ENCODE measurements at regions of chr2 and their contacts with region 1.

Region 1: DNA sequence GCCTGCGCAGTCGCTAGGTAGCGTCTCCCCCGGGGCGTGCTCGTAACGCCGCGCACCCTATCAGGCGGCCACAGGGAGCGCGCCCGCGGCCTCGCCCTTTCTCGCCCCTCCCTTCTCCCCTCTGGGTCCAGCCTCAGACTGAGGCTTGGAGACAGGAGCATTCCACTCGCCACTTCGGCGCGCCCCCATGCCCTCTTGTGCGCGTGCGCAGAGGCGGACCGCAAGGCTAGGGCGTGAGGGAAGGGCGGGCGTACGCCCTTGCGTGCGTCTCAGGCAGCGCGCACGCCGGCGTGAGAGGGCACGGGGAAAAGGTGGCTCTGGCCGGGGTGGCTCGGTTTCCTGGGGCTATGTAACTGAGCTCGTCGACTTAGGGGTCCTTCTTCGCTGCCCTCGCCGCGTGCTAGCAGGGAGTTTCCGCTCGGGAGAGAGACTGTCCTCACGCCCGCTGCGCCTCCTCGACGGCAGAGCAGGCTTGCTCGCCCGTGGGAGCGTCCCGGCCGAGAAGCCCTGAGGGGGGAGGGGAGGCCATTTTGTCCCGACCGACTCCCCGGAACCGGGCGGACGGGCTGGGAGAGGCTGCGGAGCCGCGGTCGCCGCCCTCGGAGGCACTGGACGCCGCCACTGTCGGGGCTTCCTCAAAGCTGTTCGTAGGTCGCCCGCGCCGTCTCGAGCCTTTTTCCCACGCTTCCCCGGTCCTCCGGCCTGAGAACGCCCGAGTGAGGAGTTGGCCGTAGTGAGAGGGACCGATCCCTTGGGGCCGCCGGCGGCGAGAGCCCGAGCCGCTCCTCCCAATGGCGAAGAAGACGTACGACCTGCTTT is at the start of gene RAB10:
- DNase-seq: peak; percentile 99
- H3K4me3 Mint-ChIP-seq: peak within 1 kb of the TSS; percentile 96
- H3K27ac Mint-ChIP-seq: peak within 1 kb of the TSS; percentile 92
- H3K4me1 Mint-ChIP-seq: peaks cover 22% of the 10 kb centered on the region
- H3K27me3 Mint-ChIP-seq: no peaks in the 10 kb centered on the region
- CTCF ChIP-seq: no peak
- total RNA-seq, gene RAB10: 139 and 147 TPM in 2 replicates

Region 2: DNA sequence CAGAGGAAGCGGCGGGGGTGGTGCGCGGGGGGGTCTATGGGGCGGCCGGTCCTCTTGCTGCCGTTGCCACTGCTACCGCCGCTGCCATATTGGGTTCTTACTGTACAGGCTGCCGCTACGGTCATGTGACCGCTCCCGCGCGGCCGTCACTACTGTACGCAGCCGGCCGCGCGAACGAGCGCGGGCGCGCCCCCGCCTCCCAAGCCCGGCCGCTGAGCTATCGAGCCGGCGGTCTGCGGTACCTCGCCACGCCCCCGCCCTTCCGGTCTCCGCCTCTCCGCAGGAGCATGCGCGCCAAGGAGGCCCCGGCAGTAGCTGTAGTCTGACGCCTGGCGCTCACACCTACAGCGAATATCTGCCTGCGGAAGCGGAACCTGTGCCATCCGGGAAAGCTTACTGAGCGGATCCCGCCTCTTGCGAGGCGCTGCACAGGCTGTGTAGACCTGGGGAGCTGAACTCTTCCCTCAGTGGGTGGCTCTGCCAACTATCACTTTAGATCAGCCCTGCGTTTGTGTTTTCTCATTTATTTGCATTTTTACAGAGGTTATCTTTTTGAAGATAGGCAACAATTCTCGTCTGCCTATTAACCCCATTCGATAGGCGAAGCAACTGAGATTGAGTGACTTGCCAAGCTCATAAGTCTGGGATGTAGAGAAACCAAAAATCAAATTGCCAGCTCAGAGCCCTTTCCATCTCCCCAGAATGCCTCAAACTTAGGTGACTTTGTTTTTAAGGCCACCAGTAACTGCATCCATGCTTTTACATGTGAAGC is 155.5 kb before region 1 on chr2 and contains the start of gene ASXL2:
- CTCF ChIA-PET with region 1: no interaction called
- POLR2A ChIA-PET with region 1: interaction called, 17 read pairs
- intact Hi-C with region 1: no loop called
- DNase-seq: peak; percentile 95
- H3K4me3 Mint-ChIP-seq: peak within 1 kb of the TSS; percentile 95
- H3K27ac Mint-ChIP-seq: peak within 1 kb of the TSS; percentile 83
- H3K4me1 Mint-ChIP-seq: peaks cover 28% of the 10 kb centered on the region
- H3K27me3 Mint-ChIP-seq: no peaks in the 10 kb centered on the region
- CTCF ChIP-seq: no peak
- total RNA-seq, gene ASXL2: 34.0 and 35.3 TPM in 2 replicates

Region 3: DNA sequence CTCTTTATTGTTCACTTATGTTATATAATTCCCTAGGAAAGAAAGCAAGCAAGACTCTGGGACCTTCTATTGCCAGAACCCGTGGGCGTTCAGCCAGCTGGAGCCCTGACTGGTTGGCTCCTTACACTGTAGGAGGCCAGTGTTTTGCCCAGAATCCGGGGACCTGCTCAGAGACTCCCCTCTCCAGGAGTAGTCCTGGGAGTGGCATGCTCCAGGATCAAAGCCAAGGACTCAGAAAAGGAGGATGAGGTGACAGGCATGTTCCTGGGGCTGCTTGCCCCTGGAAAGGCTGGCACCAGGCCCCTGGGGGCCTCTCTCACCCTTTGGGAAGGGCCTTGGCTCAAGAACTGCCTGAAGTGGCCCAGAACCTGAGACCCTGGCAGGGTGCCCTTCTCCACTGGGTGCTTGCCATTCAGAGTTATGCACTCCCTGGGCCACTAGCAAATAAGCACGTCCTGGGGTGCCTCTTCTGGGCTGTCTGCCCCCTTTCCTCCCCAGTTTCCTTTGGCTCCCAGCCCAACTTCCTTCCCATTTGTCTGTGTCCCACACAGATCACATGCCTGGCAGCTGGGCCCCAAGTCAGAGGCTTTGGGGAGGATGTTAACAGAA is 32.2 kb before region 1 on chr2:
- CTCF ChIA-PET with region 1: interaction called, 3 read pairs
- POLR2A ChIA-PET with region 1: interaction called, 100 read pairs
- intact Hi-C with region 1: loop called (anchors 1 kb)
- DNase-seq: peak; percentile 87
- H3K4me3 Mint-ChIP-seq: no peak overlapping the region
- H3K27ac Mint-ChIP-seq: no peak overlapping the region
- H3K4me1 Mint-ChIP-seq: peaks cover 36% of the 10 kb centered on the region
- H3K27me3 Mint-ChIP-seq: no peaks in the 10 kb centered on the region
- CTCF ChIP-seq: no peak

Region 4: DNA sequence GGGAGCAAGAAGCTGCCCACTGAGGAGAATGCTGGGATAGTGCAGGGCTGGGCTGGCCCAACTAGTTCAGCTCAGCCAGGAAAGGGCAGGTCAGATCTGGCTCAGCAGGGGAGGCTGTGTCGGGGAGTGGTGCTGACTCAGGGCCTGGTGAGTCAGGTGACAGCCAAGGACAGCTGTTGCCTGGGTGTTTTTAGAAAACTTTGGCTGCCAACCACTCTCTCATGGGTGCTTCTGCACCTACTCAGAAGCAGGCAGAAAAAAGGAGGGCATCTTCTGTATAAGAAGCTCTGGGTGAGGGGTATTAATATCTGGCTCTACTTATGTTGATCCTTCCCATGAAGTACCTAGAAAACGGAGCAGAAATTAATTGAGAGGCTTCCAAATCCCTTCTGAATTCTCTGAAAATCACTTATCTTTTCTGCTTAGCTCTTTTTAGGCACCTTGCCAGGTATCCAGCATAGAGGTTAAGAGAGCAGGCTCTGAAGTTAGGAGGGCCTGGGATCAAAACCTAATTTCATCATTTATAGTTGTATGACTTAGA is 15.8 kb before region 1 on chr2:
- CTCF ChIA-PET with region 1: interaction called, 6 read pairs
- POLR2A ChIA-PET with region 1: interaction called, 250 read pairs
- intact Hi-C with region 1: no loop called
- DNase-seq: peak; percentile 93
- H3K4me3 Mint-ChIP-seq: no peak overlapping the region
- H3K27ac Mint-ChIP-seq: peak overlapping the region; percentile 56
- H3K4me1 Mint-ChIP-seq: peaks cover 22% of the 10 kb centered on the region
- H3K27me3 Mint-ChIP-seq: no peaks in the 10 kb centered on the region
- CTCF ChIP-seq: no peak

Region 5: GRCh38 chr2:26068602-26069298 is 34.7 kb after region 1 on chr2:
- CTCF ChIA-PET with region 1: no interaction called
- POLR2A ChIA-PET with region 1: interaction called, 68 read pairs
- intact Hi-C with region 1: no loop called
- DNase-seq: peak; percentile 77
- H3K4me3 Mint-ChIP-seq: no peak overlapping the region
- H3K27ac Mint-ChIP-seq: peak overlapping the region; percentile 80
- H3K4me1 Mint-ChIP-seq: peaks cover 19% of the 10 kb centered on the region
- H3K27me3 Mint-ChIP-seq: no peaks in the 10 kb centered on the region
- CTCF ChIP-seq: no peak

Region 6: GRCh38 chr2:26139269-26140183 is 105.5 kb after region 1 on chr2:
- CTCF ChIA-PET with region 1: no interaction called
- POLR2A ChIA-PET with region 1: interaction called, 10 read pairs
- intact Hi-C with region 1: no loop called
- DNase-seq: no peak
- H3K4me3 Mint-ChIP-seq: no peak overlapping the region
- H3K27ac Mint-ChIP-seq: no peak overlapping the region
- H3K4me1 Mint-ChIP-seq: no peaks in the 10 kb centered on the region
- H3K27me3 Mint-ChIP-seq: no peaks in the 10 kb centered on the region
- CTCF ChIP-seq: no peak

Region 7: GRCh38 chr2:26345545-26346453 is 311.8 kb after region 1 on chr2 and contains the start of gene SELENOI:
- CTCF ChIA-PET with region 1: no interaction called
- POLR2A ChIA-PET with region 1: interaction called, 27 read pairs
- intact Hi-C with region 1: no loop called
- DNase-seq: peak; percentile 99
- H3K4me3 Mint-ChIP-seq: peak within 1 kb of the TSS; percentile 96
- H3K27ac Mint-ChIP-seq: peak within 1 kb of the TSS; percentile 97
- H3K4me1 Mint-ChIP-seq: peaks cover 17% of the 10 kb centered on the region
- H3K27me3 Mint-ChIP-seq: no peaks in the 10 kb centered on the region
- CTCF ChIP-seq: no peak
- total RNA-seq, gene SELENOI: 43.8 and 51.0 TPM in 2 replicates